Heart left ventricle (tissue), 16 donors: ENCODE measurements at regions of chr3 and their contacts with region 1.

Region 1: DNA sequence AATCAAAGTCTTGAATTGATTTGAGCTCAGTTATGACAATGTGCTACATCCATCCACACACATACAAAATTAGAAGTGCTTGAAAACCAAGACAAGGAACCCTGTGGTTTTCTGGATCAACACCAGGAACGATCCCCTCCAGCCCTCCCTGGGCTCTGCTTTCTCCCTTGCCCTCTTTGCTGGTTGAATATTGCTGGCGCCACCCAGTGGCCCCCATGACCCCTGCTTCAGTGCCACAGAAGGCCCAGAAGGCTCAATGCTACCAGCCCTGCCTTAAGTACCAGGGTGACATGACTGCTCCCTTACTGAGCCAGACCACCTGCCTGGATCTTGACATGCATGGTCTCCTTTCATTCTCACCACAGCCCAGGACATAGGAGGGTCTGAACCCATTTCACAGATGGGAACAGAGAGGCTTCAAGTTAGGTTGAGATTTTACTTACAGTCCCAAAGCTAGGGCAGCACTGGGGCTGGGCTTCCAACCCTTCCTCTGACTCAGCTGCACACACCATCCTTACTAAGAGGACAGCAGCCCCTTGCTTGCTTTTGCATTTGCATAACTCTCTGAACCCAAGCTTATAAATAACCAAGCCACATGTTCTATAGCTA is 15.0 kb downstream of the IL12A start:
- DNase-seq: peak; percentile 45 to 76 (median 62)
- ATAC-seq: peak; percentile 69 to 91 (median 87)
- H3K4me3 ChIP-seq: no peak overlapping the region
- H3K27ac ChIP-seq: no peak overlapping the region
- H3K4me1 ChIP-seq: peaks cover 0 to 4% (median 0%) of the 10 kb centered on the region in 12 donors
- H3K27me3 ChIP-seq: no peaks in the 10 kb centered on the region
- CTCF ChIP-seq: peak; percentile 54 to 71 (median 62)
- POLR2A ChIP-seq: no peak

Region 2: DNA sequence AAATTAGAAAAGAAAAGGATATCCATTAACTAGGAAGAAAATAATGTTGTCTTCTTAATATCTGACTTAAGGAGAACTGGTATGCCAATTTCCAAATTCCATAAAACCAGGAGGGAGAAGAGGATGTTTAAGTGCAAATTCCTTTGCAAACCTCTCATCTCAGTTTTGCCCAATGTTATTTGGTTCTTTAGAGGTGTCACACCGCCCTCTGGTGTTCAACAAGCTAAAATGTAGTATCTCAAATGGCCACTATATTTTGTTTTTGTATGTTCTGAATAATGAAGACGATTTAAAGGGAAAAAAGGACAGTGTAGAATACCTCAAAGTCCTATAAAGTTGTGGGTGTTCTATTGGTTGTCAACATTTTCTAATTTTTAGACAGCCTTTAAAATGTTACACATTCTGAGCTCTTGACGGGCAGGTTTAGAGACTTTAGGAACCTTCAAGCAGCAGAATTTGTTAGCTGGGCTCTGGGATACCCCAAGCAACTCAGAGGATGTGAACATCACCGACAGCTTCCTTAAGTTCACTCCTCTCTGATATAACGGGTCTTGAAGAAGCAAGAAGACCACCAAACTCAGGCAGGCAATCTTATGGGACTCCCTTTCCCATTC is 743.5 kb before region 1 on chr3:
- intact Hi-C with region 1: loop called (anchors 2 to 10 kb)
- DNase-seq: peak in 3 of 5 donors; percentile 20 to 32 (median 29)
- ATAC-seq: peak in 1 of 4 donors; percentile 49
- H3K4me3 ChIP-seq: no peak overlapping the region
- H3K27ac ChIP-seq: no peak overlapping the region
- H3K4me1 ChIP-seq: no peaks in the 10 kb centered on the region
- H3K27me3 ChIP-seq: no peaks in the 10 kb centered on the region
- CTCF ChIP-seq: peak; percentile 54 to 81 (median 71)
- POLR2A ChIP-seq: no peak

Region 3: GRCh38 chr3:159609625-159610024 is 394.0 kb before region 1 on chr3:
- intact Hi-C with region 1: loop called in 4 of 10 experiments (anchors 5 to 10 kb)
- DNase-seq: no peak
- ATAC-seq: no peak
- H3K4me3 ChIP-seq: no peak overlapping the region
- H3K27ac ChIP-seq: no peak overlapping the region
- H3K4me1 ChIP-seq: peaks cover 0 to 11% (median 0%) of the 10 kb centered on the region in 12 donors
- H3K27me3 ChIP-seq: no peaks in the 10 kb centered on the region
- CTCF ChIP-seq: no peak
- POLR2A ChIP-seq: no peak

Region 4: GRCh38 chr3:159813822-159814523 is 189.7 kb before region 1 on chr3:
- intact Hi-C with region 1: loop called in 1 of 10 experiments (anchors 2 kb)
- DNase-seq: no peak
- ATAC-seq: no peak
- H3K4me3 ChIP-seq: no peak overlapping the region
- H3K27ac ChIP-seq: no peak overlapping the region
- H3K4me1 ChIP-seq: peaks cover 0 to 32% (median 18%) of the 10 kb centered on the region in 12 donors
- H3K27me3 ChIP-seq: no peaks in the 10 kb centered on the region
- CTCF ChIP-seq: no peak
- POLR2A ChIP-seq: no peak

Region 5: DNA sequence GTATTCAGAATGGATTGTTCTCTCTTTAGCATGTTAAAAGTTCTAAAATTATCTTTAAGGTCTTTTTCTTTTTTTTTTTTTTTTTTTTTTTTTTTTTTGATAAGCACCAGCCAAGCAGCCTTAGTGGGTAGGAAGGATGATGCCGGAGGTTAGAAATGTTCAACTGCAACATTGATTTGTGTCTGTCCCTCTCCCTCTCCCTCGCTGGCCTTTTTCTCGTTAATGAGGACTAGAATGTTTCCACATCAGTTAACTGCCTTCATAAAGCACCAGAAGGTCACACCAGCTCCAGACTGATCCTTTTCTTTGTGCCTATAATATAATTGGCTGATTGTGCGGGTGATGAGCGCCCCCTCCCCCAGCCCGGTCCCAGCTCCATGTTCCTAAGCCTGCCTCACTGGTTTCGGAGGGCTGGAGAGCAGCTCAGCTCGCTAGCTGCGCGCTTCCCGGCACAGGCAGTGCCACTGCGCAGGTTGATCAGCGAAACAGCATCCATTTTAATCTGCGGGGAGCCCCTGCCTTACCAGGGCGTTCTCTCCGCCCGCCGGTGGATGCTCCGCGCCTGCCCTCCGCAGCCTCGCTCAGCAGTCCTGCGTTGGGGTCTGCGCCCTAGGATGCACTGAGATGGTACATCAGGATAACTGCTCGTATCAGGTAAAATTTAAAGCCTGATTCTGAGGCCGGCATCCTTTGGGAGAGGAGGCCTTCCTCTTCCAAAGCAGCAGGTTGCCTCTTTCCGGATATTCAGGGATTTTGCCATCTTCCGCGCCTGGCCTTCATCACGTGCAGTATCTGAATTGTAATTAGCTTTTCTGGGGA is 163.9 kb before region 1 on chr3:
- intact Hi-C with region 1: no loop called
- DNase-seq: peak in 4 of 5 donors; percentile 35 to 69 (median 44)
- ATAC-seq: peak; percentile 58 to 78 (median 64)
- H3K4me3 ChIP-seq: peak within 1 kb of the TSS; percentile 9 to 60 (median 48)
- H3K27ac ChIP-seq: peak within 1 kb of the TSS; percentile 44 to 84 (median 75)
- H3K4me1 ChIP-seq: peaks cover 9 to 72% (median 46%) of the 10 kb centered on the region in 12 donors
- H3K27me3 ChIP-seq: no peaks in the 10 kb centered on the region
- CTCF ChIP-seq: no peak
- POLR2A ChIP-seq: no peak

Region 6: DNA sequence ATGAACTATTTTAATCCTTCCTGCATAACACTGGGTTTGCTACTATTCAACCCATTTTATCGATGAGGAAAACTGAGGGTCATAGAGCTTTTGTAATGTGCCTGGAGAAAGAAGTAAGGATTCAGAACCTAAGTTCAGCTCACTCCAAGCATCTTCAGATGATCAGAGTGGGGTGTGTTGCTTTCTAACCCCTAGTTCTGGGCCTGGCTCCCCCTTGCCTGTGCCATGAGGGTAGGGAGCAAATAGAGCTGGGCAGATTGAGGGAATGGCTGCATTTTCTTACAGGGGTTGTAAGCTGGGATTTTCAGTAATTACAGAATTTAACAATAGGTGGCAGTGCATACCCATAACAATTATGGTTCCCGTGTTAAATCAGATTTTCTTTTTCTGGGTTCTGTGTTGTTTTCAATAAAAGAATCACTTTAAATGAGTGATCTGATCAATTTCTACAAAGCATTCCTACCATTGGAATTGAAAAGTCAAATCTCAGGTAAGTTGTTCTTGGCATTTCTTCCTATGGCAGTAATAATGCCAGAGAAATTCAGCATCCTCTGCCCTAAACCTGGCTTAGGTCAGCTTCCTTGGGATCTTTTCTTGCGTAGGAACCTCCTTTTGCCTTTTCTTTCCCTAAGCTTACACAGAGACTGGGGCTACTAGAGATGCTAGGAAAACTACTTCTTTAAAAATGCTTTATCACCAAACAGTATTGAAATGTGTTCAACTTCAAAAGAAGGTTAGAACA is 118.8 kb before region 1 on chr3:
- intact Hi-C with region 1: loop called in 9 of 10 experiments (anchors 2 to 5 kb)
- DNase-seq: no peak
- ATAC-seq: no peak
- H3K4me3 ChIP-seq: no peak overlapping the region
- H3K27ac ChIP-seq: peak overlapping the region in 6 of 12 donors; percentile 11 to 44 (median 34)
- H3K4me1 ChIP-seq: peaks cover 7 to 84% (median 62%) of the 10 kb centered on the region in 12 donors
- H3K27me3 ChIP-seq: no peaks in the 10 kb centered on the region
- CTCF ChIP-seq: peak; percentile 42 to 73 (median 62)
- POLR2A ChIP-seq: no peak

Region 7: GRCh38 chr3:159922193-159922840 is 81.3 kb before region 1 on chr3:
- intact Hi-C with region 1: no loop called
- DNase-seq: no peak
- ATAC-seq: no peak
- H3K4me3 ChIP-seq: no peak overlapping the region
- H3K27ac ChIP-seq: no peak overlapping the region
- H3K4me1 ChIP-seq: peaks cover 0 to 21% (median 0%) of the 10 kb centered on the region in 12 donors
- H3K27me3 ChIP-seq: no peaks in the 10 kb centered on the region
- CTCF ChIP-seq: no peak
- POLR2A ChIP-seq: no peak